CD8-positive, alpha-beta memory T cell (primary cell): ENCODE measurements at regions of chr14 and their contacts with region 1.

Region 1: GRCh38 chr14:55333711-55334485 is 62.7 kb downstream of the FBXO34 start:
- DNase-seq: no peak
- H3K4me3 ChIP-seq: peak overlapping the region; percentile 33
- H3K4me3 Mint-ChIP-seq: peak overlapping the region; percentile 68 to 90 (median 88)
- H3K27ac ChIP-seq: peak overlapping the region; percentile 66
- H3K27ac Mint-ChIP-seq: peak overlapping the region; percentile 88 to 99 (median 96)
- H3K4me1 ChIP-seq: peaks cover 70% of the 10 kb centered on the region
- H3K4me1 Mint-ChIP-seq: peaks cover 82 to 94% (median 90%) of the 10 kb centered on the region in 3 donors
- H3K27me3 ChIP-seq: no peaks in the 10 kb centered on the region
- H3K27me3 Mint-ChIP-seq: peaks cover 0 to 2% of the 10 kb centered on the region in 2 donors

Region 2: GRCh38 chr14:55201224-55202050 is 132.5 kb before region 1 on chr14:
- CTCF ChIA-PET with region 1: no interaction called
- POLR2A ChIA-PET with region 1: no interaction called
- DNase-seq: no peak
- H3K4me3 ChIP-seq: no peak overlapping the region
- H3K4me3 Mint-ChIP-seq: no peak overlapping the region
- H3K27ac ChIP-seq: no peak overlapping the region
- H3K27ac Mint-ChIP-seq: no peak overlapping the region
- H3K4me1 ChIP-seq: no peaks in the 10 kb centered on the region
- H3K4me1 Mint-ChIP-seq: no peaks in the 10 kb centered on the region
- H3K27me3 ChIP-seq: no peaks in the 10 kb centered on the region
- H3K27me3 Mint-ChIP-seq: peaks cover 6 to 10% of the 10 kb centered on the region in 2 donors

Region 3: DNA sequence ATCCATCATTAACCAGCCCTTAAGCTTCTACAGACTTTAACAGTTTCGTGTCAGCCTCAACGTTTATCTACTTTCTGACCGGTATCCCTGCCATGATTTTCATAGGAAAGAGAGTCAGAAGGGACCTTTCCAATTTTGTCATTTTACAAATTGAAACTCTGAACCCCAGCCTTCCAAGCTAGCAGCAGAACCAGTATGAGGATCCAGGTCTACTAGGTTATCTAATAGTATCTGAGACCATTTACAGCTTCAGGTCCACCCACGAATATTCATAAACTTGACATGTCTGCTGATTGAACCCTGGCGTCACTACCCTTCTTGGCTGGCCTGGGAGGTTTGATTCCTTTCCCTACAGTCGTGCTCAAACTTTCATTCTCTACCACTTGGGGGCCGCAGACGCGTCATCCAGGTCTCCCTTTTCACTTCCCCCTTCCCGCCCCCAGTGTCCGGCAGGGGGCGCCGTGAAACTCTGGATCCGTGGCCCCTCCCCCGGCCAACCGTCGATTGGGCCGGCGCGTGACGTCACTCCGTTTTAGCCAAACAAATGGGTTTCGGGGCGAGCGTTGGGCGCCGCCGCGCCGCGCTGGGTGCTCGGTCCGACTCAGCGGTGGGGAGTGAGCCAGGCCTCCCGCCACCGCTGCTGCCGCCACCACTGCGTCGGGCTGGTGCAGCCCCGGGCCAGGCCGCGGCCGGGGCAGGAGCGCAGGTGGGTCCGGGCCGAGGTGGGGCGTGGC is 62.9 kb before region 1 on chr14 and contains the start of gene FBXO34:
- CTCF ChIA-PET with region 1: interaction called, 29 read pairs
- POLR2A ChIA-PET with region 1: interaction called, 18 read pairs
- DNase-seq: peak; percentile 98 to 100 (median 99)
- H3K4me3 ChIP-seq: peak within 1 kb of the TSS; percentile 94
- H3K4me3 Mint-ChIP-seq: peak within 1 kb of the TSS; percentile 89 to 96 (median 91)
- H3K27ac ChIP-seq: peak within 1 kb of the TSS; percentile 86
- H3K27ac Mint-ChIP-seq: peak within 1 kb of the TSS; percentile 92 to 98 (median 94)
- H3K4me1 ChIP-seq: peaks cover 21% of the 10 kb centered on the region
- H3K4me1 Mint-ChIP-seq: peaks cover 34 to 51% (median 47%) of the 10 kb centered on the region in 3 donors
- H3K27me3 ChIP-seq: no peaks in the 10 kb centered on the region
- H3K27me3 Mint-ChIP-seq: peaks cover 0 to 9% of the 10 kb centered on the region in 2 donors
- total RNA-seq, gene FBXO34: 16.2 to 17.9 TPM